Activated B cell treated with CpG ODN at 0.5 μM for 24 hours (primary cell): ENCODE measurements at regions of chr3 and their contacts with region 1.

Region 1: DNA sequence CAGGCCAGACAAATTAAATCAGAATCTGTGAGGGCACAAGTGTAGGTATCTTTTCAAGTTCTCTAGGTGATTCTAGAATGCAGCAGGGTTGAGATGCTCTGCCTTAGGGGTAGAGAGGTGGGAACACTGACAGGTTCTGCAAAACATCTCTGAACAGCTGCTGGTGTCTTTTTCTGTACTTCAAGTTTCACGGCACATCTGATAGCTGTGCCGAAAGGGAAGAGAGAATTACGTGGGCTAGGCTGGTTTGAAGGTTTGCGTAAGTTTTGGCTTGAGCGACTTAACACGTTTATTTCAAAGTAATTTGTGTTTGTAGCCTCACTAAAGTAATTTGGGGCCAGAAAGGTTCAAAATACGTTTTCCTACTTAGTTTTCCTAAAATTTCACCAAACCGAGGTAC is 22.5 kb downstream of the PXK start:
- DNase-seq: no peak
- ATAC-seq: peak; percentile 54
- H3K4me3 Mint-ChIP-seq: peak overlapping the region; percentile 73
- H3K27ac Mint-ChIP-seq: peak overlapping the region; percentile 100
- H3K4me1 Mint-ChIP-seq: peaks cover 90% of the 10 kb centered on the region
- H3K27me3 Mint-ChIP-seq: no peaks in the 10 kb centered on the region
- CTCF ChIP-seq: no peak

Region 2: DNA sequence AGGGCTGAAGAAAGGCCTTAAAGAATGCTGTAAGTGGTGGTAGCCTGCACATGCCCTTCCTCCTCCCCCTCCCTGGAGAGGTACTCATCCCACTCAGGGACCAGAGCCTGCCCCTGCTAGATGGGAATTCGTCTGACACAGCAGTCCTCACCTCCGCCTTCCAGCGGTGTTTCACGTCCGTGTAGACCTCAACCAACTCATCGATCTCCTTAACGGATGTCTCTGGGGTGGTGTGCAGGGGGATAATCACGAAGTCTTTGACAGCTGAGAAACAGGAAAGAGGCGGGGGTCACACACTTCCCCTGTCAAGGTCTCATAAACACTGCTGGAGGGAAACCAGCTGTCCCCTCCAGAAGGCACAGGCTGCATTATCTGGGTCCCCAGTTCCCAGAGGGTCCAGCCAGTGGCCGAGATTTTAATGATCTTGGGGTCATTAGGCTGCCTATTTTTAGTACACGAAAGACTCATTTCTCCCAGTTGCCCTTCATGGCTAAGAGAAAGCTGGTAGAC is 154.3 kb before region 1 on chr3:
- CTCF ChIA-PET with region 1: no interaction called
- POLR2A ChIA-PET with region 1: interaction called, 14 read pairs
- intact Hi-C with region 1: loop called (anchors 5 kb)
- DNase-seq: no peak
- ATAC-seq: no peak
- H3K4me3 Mint-ChIP-seq: peak overlapping the region; percentile 64
- H3K27ac Mint-ChIP-seq: peak overlapping the region; percentile 70
- H3K4me1 Mint-ChIP-seq: peaks cover 66% of the 10 kb centered on the region
- H3K27me3 Mint-ChIP-seq: no peaks in the 10 kb centered on the region
- CTCF ChIP-seq: no peak

Region 3: DNA sequence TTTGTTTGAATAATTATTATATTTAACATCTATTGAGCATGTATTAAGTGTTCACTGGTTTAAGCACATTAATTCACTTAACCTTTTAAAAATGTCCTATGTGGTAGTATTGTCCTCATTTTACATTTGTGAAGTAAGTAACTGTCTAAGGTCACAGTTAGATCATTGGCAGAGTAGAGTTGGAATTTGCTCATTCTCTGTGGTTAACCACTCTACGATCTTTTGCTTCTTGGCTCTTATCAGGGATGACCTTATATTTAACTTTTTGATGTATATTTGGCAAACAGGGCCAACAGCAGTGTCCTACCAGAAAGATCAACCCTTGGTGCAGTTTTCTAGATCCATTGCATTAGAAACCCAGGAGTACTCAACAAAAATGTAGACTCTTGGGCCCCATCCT is 11.5 kb after region 1 on chr3:
- CTCF ChIA-PET with region 1: no interaction called
- POLR2A ChIA-PET with region 1: interaction called, 8 read pairs
- intact Hi-C with region 1: loop called (anchors 1 kb)
- DNase-seq: no peak
- ATAC-seq: no peak
- H3K4me3 Mint-ChIP-seq: no peak overlapping the region
- H3K27ac Mint-ChIP-seq: peak overlapping the region; percentile 59
- H3K4me1 Mint-ChIP-seq: peaks cover 59% of the 10 kb centered on the region
- H3K27me3 Mint-ChIP-seq: no peaks in the 10 kb centered on the region
- CTCF ChIP-seq: no peak

Region 4: DNA sequence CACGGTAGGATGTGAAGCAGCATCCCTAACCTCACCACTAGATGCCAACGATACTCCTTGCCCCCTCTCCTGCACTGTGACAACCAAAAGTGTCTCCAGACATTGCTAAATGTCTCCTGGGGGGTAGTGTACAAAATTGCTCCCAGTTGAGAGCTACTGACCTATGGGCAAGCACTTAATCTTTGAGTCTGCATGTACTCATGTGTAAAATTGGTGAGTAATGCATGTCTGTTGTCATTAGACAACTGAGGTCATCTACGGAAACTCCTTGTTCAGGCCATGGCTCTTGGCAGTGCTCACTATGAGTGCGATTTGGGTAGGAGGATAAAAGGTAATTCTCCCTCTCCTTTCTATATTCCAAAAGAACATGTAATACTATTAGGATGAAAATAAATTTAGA is 49.2 kb after region 1 on chr3:
- CTCF ChIA-PET with region 1: interaction called, 7 read pairs
- POLR2A ChIA-PET with region 1: interaction called, 13 read pairs
- intact Hi-C with region 1: loop called (anchors 2 kb)
- DNase-seq: no peak
- ATAC-seq: peak; percentile 48
- H3K4me3 Mint-ChIP-seq: no peak overlapping the region
- H3K27ac Mint-ChIP-seq: peak overlapping the region; percentile 68
- H3K4me1 Mint-ChIP-seq: peaks cover 59% of the 10 kb centered on the region
- H3K27me3 Mint-ChIP-seq: no peaks in the 10 kb centered on the region
- CTCF ChIP-seq: no peak

Region 5: GRCh38 chr3:58414538-58415197 is 59.5 kb after region 1 on chr3:
- CTCF ChIA-PET with region 1: interaction called, 20 read pairs
- POLR2A ChIA-PET with region 1: interaction called, 6 read pairs
- intact Hi-C with region 1: loop called (anchors 2 kb)
- DNase-seq: no peak
- ATAC-seq: peak; percentile 81
- H3K4me3 Mint-ChIP-seq: no peak overlapping the region
- H3K27ac Mint-ChIP-seq: no peak overlapping the region
- H3K4me1 Mint-ChIP-seq: peaks cover 48% of the 10 kb centered on the region
- H3K27me3 Mint-ChIP-seq: no peaks in the 10 kb centered on the region
- CTCF ChIP-seq: peak; percentile 55

Region 6: DNA sequence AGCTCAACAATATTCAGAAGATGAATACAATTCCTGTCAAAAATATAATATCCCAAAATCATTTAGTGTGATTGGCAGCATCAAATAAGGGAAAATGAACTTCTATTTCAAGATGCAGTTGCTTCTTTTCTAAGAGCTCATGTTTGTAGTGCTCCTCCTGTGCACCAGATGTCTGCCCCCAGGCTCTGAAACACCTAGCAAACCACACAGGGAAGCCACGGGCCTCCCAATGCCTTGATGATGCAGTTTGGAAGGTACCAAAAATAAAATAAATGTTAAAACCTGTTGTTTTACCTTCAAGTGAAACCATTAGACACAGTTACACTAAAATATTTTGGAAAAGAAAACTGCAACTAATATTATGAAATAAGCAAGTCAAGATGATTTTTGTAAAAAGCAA is 672.4 kb after region 1 on chr3:
- CTCF ChIA-PET with region 1: no interaction called
- POLR2A ChIA-PET with region 1: no interaction called
- intact Hi-C with region 1: no loop called
- DNase-seq: no peak
- ATAC-seq: no peak
- H3K4me3 Mint-ChIP-seq: no peak overlapping the region
- H3K27ac Mint-ChIP-seq: no peak overlapping the region
- H3K4me1 Mint-ChIP-seq: peaks cover 5% of the 10 kb centered on the region
- H3K27me3 Mint-ChIP-seq: no peaks in the 10 kb centered on the region
- CTCF ChIP-seq: no peak